Ovary (tissue), 10 donors: ENCODE measurements at regions of chr1 and their contacts with region 1.

Region 1: DNA sequence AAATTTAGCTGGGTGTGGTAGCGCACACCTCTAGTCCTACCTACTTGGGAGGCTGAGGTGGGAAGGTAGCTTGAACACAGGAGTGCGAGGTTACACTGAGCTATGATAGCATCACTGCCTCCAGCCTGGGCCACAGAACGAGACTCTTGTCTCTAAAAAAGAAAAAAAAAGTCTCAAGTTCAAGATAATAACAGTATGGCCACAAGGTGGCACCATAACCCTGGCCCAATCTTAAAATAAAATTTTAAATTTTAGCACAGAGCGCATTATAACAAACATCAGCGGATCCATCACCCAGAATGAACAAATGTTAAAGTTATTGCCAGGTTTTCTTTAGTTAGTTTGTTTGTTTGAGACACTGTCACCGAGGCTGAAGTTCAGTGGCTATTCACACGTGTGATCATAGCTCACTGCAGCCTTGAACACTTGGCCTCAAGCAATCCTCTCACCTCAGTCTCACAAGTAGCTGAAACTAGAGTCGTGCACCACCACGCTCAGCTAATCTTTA is 2.9 kb upstream of the HTR6 start:
- DNase-seq: peak in 1 of 5 donors; percentile 47
- H3K4me3 ChIP-seq: no peak overlapping the region
- H3K27ac ChIP-seq: no peak overlapping the region
- H3K4me1 ChIP-seq: peaks cover 3% of the 10 kb centered on the region
- H3K27me3 ChIP-seq: peaks cover 3% of the 10 kb centered on the region
- CTCF ChIP-seq: peak; percentile 49 to 68 (median 65)
- EP300 ChIP-seq: no peak
- POLR2A ChIP-seq: no peak

Region 2: GRCh38 chr1:19251305-19252196 is 410.2 kb before region 1 on chr1 and contains the starts of genes EMC1 and MRTO4:
- intact Hi-C with region 1: loop called in 1 of 4 experiments (anchors 5 kb)
- DNase-seq: peak; percentile 80 to 93 (median 83)
- H3K4me3 ChIP-seq: peak within 1 kb of the TSS; percentile 80
- H3K27ac ChIP-seq: peak within 1 kb of the TSS; percentile 93 to 98
- H3K4me1 ChIP-seq: peaks cover 15% of the 10 kb centered on the region
- H3K27me3 ChIP-seq: no peaks in the 10 kb centered on the region
- CTCF ChIP-seq: peak in 1 of 3 donors; percentile 5
- EP300 ChIP-seq: no peak
- POLR2A ChIP-seq: no peak
- total RNA-seq, gene EMC1: 22.5 to 53.9 (median 34.4) TPM
- total RNA-seq, gene MRTO4: 14.3 to 49.1 (median 29.9) TPM

Region 3: GRCh38 chr1:19704247-19705113 is 42.7 kb after region 1 on chr1:
- intact Hi-C with region 1: loop called in 2 of 4 experiments (anchors 5 kb)
- DNase-seq: peak; percentile 70 to 85 (median 80)
- H3K4me3 ChIP-seq: no peak overlapping the region
- H3K27ac ChIP-seq: no peak overlapping the region
- H3K4me1 ChIP-seq: peaks cover 7% of the 10 kb centered on the region
- H3K27me3 ChIP-seq: no peaks in the 10 kb centered on the region
- CTCF ChIP-seq: peak; percentile 76 to 90 (median 77)
- EP300 ChIP-seq: no peak
- POLR2A ChIP-seq: no peak